Sigmoid colon (tissue), 7 donors: ENCODE measurements at regions of chr7 and their contacts with region 1.

Region 1: GRCh38 chr7:518630-519483 is 789 bp downstream of the PDGFA start:
- DNase-seq: peak; percentile 92
- H3K4me3 ChIP-seq: peak overlapping the region; percentile 68 to 87 (median 69)
- H3K27ac ChIP-seq: peak overlapping the region; percentile 89 to 96 (median 93)
- H3K4me1 ChIP-seq: peaks cover 0 to 72% (median 63%) of the 10 kb centered on the region in 4 donors
- H3K27me3 ChIP-seq: peaks cover 0 to 25% (median 4%) of the 10 kb centered on the region in 3 donors
- CTCF ChIP-seq: no peak
- EP300 ChIP-seq: no peak
- POLR2A ChIP-seq: peak; percentile 61 to 80

Region 2: DNA sequence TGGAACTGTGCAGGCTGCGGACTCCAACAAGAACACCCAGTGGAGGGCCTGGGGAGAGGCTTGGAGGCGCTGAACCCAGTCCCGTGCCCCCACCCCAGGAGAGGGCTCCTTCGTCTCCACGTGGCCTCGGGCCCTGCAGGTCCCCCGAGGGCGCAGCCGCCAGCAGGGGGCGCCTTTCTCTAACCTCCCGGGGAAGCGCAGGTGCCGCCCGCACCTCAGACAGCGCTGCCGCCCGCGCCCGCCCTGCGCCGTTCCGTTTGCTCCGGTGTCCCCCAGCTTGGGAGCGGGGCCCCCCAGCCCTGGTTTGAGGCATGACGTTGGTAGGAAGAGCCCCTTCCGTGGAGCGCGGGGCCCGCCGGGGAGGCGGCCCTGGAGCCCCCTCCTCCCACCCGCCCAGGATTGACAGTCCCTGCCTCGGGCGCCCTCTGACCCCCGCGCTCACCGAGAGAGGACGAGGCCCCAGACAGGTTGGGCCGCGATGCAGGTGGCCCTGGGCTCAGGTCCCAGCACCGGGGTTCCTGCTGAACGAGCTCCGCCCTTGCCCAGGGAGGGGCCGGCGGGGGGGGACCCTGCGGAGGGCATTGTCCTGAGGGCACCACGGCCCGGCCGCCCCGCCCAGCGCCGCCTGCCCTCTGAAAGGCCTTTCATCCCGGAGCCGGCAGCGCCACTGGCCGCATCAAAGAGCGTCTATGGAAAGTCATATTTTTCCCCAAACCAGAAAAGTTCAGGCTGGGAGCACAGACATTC is 186.0 kb before region 1 on chr7:
- intact Hi-C with region 1: loop called (anchors 5 kb)
- DNase-seq: peak; percentile 86
- H3K4me3 ChIP-seq: peak overlapping the region in 3 of 4 donors; percentile 31 to 48 (median 42)
- H3K27ac ChIP-seq: peak overlapping the region; percentile 53 to 74 (median 64)
- H3K4me1 ChIP-seq: peaks cover 0 to 18% (median 17%) of the 10 kb centered on the region in 4 donors
- H3K27me3 ChIP-seq: peaks cover 0 to 8% (median 0%) of the 10 kb centered on the region in 3 donors
- CTCF ChIP-seq: peak; percentile 53 to 90 (median 76)
- EP300 ChIP-seq: no peak
- POLR2A ChIP-seq: no peak

Region 3: GRCh38 chr7:712381-713138 is 193.7 kb after region 1 on chr7:
- intact Hi-C with region 1: loop called (anchors 5 kb)
- DNase-seq: peak; percentile 64
- H3K4me3 ChIP-seq: peak overlapping the region; percentile 43 to 91 (median 72)
- H3K27ac ChIP-seq: peak overlapping the region in 2 of 4 donors; percentile 56 to 63
- H3K4me1 ChIP-seq: peaks cover 0 to 17% (median 10%) of the 10 kb centered on the region in 4 donors
- H3K27me3 ChIP-seq: no peaks in the 10 kb centered on the region
- CTCF ChIP-seq: no peak
- EP300 ChIP-seq: no peak
- POLR2A ChIP-seq: no peak

Region 4: DNA sequence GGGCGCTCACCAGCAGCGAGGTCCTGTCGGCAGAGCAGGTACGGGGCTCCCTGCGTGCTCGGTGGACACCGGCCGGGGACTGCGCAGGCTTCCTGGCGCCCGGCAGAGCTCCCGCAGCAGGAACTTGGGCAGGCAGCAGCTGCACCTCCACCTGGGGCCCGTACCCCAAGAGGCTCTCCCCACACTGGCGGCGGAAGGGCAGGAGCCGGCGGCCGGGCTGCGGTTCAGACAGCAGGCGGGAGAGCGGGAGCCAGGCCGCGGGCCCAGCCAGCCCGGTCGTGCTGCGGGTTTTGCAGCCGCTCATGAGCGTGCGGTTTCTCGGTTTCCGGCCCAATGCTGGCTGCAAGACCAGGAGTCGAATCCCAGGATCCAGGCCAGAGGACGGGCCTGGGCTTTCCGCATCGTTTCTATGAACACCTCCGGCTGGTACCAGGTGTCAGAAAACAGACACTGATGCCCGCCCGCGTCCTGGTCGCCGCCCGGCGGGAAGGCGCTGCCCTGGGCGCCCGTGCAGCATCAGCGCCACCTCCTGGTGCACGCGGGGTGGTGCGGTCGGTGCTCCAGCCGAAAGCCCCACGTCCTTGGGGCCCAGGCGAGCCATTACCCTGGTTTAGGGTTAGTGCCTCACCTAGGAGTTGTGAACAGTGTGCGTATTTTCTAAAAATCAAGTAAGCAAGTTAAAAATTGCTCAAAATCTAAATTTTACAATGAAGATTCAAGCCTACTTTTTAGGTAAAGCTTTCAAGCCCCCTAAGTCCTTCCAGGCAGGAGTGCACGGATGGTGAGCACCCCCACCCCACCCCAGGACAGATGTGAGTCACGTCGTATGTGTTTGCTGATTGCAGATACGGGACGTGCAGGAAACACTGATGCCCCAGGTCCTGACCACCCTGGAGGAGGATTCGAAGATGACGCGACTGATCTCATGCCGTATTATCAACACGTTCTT is 255.6 kb after region 1 on chr7:
- intact Hi-C with region 1: loop called (anchors 2 kb)
- DNase-seq: no peak
- H3K4me3 ChIP-seq: no peak overlapping the region
- H3K27ac ChIP-seq: no peak overlapping the region
- H3K4me1 ChIP-seq: peaks cover 4 to 40% (median 38%) of the 10 kb centered on the region in 4 donors
- H3K27me3 ChIP-seq: no peaks in the 10 kb centered on the region
- CTCF ChIP-seq: peak; percentile 87 to 98 (median 91)
- EP300 ChIP-seq: no peak
- POLR2A ChIP-seq: no peak

Region 5: GRCh38 chr7:974820-975681 is 456.2 kb after region 1 on chr7 and contains the start of gene COX19:
- intact Hi-C with region 1: no loop called
- DNase-seq: peak; percentile 94
- H3K4me3 ChIP-seq: peak within 1 kb of the TSS; percentile 90 to 100 (median 100)
- H3K27ac ChIP-seq: peak within 1 kb of the TSS; percentile 94 to 99 (median 98)
- H3K4me1 ChIP-seq: peaks cover 0 to 29% (median 28%) of the 10 kb centered on the region in 4 donors
- H3K27me3 ChIP-seq: no peaks in the 10 kb centered on the region
- CTCF ChIP-seq: no peak
- EP300 ChIP-seq: no peak
- POLR2A ChIP-seq: peak; percentile 63 to 78
- total RNA-seq, gene COX19: 8.9 to 12.7 (median 9.3) TPM

Region 6: DNA sequence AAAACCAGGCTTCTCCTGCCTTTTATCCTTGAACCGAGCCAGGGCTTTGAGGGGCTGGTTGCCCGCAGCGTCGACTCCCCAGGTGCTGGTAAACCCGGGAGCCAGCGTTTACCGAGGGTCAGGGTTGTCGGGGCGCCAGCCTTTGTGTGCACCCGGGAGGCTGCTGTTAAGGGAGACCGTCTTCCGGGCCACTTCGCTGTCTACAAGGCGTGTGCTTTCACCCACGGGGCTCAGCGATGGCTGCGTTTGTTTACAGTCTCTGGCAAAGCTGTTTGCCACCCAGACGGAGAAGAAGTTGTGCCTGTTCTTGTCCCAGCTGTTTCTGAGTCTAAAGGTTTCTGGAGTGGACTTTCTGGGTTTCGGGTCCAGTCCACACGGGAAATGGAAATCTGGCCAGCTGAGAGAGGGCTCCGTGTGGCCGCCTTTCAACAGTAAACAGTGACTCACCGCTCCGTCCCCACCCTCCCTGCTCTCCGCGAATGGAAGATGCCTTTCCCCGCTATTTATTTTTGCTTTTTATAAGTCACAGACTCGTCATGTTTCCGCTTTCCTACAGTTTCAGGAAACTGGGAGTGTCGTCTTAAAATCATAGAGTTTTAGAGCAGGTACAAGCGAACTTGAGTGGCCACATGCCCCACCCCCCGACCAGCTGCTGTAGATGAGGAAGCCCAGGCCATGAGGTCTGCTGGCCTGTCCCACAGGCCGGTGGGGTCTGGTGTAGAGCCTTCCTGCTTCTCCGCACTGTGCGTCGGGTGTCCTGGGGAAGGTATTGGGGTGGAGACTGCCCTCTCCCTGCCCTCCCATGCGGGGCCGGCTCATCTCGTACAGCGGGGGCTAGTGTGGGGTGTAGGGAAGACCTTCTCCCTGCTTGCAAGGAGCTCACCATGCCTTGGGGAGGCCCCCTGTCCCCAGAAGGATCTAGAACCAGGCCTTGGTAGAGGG is 1013.9 kb after region 1 on chr7:
- intact Hi-C with region 1: loop called (anchors 10 kb)
- DNase-seq: peak; percentile 93
- H3K4me3 ChIP-seq: peak overlapping the region; percentile 56 to 80 (median 74)
- H3K27ac ChIP-seq: peak overlapping the region; percentile 95 to 100 (median 98)
- H3K4me1 ChIP-seq: peaks cover 0 to 65% (median 51%) of the 10 kb centered on the region in 4 donors
- H3K27me3 ChIP-seq: no peaks in the 10 kb centered on the region
- CTCF ChIP-seq: no peak
- EP300 ChIP-seq: no peak
- POLR2A ChIP-seq: peak; percentile 29 to 32